Thyroid gland (tissue), 4 donors: ENCODE measurements at regions of chr1 and their contacts with region 1.

Region 1: DNA sequence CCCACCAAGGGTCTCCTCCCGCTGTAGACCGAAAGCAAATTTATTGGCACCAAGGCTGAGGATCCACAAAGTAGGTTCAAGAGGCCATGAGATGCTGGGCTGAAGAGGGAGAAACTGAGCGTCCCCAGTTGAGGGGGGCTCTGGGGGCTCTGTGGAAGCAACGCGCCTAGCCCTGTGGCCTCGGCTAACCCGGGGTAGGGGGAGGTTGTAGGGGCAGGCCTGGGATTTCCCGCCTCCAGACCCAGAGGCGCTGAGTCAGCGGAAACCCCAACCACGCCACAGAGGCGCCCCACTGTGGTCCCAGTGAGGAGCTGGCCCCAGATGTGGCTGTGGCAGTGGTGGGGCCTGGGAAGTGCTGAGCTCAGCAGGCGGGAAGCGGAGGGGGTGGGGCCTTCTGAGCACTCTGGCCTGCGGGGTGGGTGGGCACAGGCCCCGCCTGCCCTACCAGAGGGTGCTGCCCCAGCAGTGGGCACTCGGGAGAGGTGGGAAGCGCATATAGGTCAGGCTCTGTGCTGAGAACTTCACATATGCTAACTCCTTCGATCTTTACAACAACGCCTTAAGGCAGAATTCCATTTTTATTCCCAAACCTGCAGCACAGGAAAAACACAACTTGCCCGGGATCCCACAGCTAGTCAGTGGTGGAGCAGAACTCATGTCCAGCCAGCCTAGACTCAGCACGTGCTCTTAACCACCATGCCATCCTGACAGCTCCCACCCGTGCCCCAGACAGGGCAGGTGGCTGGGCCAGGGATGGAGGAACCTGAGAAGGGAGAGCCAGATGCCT is 1.5 kb upstream of the COL16A1 start:
- DNase-seq: peak; percentile 28 to 34
- H3K4me3 ChIP-seq: no peak overlapping the region
- H3K27ac ChIP-seq: peak overlapping the region; percentile 7 to 74 (median 15)
- H3K4me1 ChIP-seq: peaks cover 18 to 40% of the 10 kb centered on the region in 2 donors
- H3K27me3 ChIP-seq: no peaks in the 10 kb centered on the region
- CTCF ChIP-seq: no peak
- POLR2A ChIP-seq: no peak

Region 2: DNA sequence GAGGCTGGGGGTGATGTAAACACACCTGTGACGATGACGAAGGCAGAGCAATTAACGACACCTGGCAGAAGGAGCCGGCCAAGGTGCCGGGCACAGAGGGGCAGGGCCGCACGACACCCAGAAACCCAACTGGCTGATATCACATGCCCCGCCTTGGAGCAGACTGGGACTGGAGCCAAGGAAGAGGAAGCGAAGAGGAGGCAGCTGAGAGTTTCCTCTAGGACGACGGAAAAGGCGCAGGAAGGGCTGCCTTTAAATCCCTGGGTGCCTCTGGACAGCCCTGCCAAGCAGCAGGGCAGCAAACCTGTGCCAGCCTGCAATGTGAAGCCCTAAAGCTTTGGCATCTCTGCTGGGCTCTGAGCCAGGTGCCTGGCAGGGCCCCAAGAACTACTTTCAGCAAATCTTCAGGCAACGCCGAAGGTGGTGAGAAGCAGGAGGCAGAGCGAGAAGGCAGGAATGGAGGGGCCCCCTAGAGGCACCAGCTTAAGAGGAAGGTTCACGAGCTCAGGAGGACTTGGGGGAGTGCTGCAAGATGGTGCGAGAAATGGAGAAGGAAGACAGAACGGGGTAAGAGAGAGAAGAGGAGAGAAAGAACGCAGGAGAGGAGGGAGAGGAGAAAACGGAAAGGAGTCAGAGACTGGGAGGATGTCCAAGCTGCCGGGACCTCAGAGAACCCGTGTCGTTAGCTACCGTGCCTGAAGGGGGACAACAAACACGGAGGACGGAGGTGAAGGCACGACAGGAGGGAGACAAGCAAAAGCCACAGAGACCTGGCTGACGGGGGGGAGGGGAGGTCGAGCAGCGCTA is 35.3 kb before region 1 on chr1:
- intact Hi-C with region 1: loop called (anchors 5 kb)
- DNase-seq: peak; percentile 98 to 99
- H3K4me3 ChIP-seq: no peak overlapping the region
- H3K27ac ChIP-seq: peak overlapping the region; percentile 80 to 88 (median 81)
- H3K4me1 ChIP-seq: peaks cover 43 to 65% of the 10 kb centered on the region in 2 donors
- H3K27me3 ChIP-seq: no peaks in the 10 kb centered on the region
- CTCF ChIP-seq: peak in 3 of 6 experiments; percentile 6 to 51 (median 34)
- POLR2A ChIP-seq: peak in 1 of 2 donors; percentile 77